ENCODE measurements at regions of chr1 and their contacts with region 1.

Region 1: DNA sequence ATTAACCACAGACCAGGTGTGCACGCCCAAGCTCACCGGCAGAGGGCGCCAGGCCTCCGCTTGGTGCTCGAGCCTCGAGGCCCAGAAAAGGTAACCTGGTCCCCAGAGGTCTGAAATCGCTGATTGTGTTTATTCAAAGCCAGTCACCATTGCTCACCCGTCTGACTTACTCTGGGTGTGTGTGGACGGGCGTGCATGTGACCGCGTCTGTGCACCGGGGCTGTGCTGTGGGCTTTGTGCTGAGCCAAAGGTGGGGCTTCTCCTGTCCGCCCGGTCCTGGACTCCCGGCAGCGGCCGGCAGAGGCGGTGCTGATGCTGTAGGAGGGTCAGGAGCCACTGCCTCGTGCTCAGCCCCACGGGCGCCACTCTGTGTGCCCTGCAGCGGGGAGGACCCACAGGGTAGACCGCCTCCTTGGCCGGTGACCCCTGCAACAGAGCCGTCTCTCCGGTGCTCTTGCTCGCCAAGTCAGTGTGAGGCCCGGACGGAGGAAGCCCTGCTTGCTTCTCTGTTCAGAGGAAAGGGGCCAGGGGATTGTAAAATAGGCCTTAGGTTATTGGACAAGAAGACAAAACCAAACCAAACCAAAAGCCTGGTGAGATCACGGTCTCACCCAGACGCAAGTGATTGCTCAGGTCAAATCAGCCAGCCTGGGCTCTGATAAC is 32.0 kb upstream of the BTG2 start:
- DNase-seq: peak; percentile 84 to 93 (median 90)
- H3K4me3 ChIP-seq: peak overlapping the region in 58 of 59 donors; percentile 5 to 61 (median 41)
- H3K27ac ChIP-seq: peak overlapping the region; percentile 71 to 99 (median 98)
- H3K27me3 ChIP-seq: no peaks in the 10 kb centered on the region
- CTCF ChIP-seq: peak; percentile 95 to 100 (median 99)

Region 2: DNA sequence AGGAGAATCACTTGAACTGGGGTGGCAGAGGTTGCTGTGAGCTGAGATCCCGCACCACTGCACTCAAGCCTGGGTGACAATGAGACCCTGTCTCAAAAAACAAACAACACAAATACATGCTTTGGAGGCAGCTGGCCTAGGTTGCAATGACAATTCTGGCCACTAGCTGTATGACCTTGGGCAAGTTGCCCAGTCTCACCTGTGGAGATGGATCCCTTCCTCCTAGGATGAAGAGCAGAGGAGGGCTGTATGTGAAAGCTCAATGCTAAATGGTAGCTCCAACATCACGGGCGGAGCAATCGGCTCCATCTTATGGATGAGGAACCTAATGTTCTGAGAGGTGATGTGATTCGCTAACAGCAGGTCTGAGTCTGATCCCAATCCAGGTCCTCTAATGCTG is 125.2 kb before region 1 on chr1:
- intact Hi-C with region 1: no loop called
- DNase-seq: peak in 1 of 10 donors; percentile 48
- H3K4me3 ChIP-seq: no peak overlapping the region
- H3K27ac ChIP-seq: peak overlapping the region in 57 of 59 donors; percentile 20 to 97 (median 85)
- H3K27me3 ChIP-seq: no peaks in the 10 kb centered on the region
- CTCF ChIP-seq: peak in 12 of 56 donors; percentile 6 to 41 (median 18)

Region 3: DNA sequence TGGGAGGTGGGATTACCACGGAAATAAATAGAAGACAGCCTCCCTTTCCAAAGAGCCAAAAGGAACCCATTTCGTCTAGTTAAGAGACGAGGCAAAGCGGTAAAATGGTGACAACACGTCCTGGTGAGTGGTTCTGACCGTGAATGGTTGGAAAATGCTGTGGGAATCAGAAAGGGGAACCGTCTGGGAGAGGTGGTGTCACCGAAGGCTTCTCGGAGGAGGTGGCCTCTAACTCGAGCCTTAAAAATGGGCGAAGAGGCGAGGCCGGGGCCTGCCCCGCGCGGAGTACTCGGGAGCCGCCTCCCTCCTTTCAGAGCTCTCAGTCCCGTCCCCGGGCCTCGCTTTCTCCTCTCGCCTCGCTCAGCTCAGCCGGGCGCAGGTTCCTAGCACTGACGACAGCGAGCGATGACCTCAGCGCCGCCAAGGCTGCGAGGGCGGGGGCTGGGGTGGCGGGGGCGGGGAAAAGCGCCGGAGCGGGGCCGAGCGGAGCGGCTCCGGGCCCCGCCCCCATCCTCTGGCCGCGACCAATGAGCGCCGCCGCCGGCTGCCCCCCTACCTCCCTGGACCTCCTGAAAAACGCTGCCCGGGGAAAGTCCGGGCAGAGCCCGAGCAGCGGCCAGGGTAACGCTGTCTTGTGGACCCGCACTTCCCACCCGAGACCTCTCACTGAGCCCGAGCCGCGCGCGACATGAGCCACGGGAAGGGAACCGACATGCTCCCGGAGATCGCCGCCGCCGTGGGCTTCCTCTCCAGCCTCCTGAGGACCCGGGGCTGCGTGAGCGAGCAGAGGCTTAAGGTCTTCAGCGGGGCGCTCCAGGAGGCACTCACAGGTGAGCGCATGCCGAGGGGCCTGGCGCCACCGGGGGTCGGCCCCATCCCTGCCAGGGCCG is 31.8 kb after region 1 on chr1 and contains the start of gene BTG2:
- intact Hi-C with region 1: loop called (anchors 1 kb)
- DNase-seq: peak; percentile 93 to 95 (median 94)
- H3K4me3 ChIP-seq: peak within 1 kb of the TSS; percentile 68 to 100 (median 98)
- H3K27ac ChIP-seq: peak within 1 kb of the TSS; percentile 80 to 100 (median 99)
- H3K27me3 ChIP-seq: no peaks in the 10 kb centered on the region
- CTCF ChIP-seq: peak in 23 of 56 donors; percentile 5 to 49 (median 20)
- total RNA-seq, gene BTG2: 21.2 to 122 (median 33.4) TPM

Region 4: DNA sequence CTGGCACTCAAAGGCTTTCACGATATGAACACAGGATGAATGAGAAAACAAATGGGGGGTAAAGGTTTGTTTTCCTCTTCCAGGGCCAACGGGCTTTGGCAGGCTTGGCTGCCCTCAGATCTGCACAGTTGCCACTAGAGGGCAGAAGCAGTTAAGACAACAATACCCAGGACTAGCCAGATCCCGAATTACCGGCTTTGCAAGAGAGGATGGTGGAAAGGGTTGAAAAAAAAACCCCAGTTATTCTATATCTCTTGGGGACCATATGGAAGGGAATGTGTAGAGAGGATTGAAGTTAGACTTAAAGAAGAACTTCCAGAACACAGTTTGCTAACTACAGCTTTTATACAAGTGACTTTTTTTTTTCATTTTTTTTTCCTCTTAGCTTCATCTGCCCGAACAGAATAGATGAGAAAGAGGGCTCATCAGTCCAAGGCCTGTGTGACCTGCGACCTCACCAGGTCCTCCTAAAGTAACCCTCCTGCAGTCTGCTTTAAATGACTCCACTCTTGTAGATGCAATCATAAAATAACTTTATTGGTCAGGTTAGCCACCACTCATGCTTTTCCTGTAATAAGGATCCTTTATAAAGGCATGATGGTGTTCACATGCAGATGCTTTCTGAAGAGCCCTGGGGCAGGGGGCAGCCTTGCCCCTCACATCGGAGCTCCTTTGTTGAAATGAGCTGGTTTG is 66.9 kb after region 1 on chr1:
- intact Hi-C with region 1: loop called in 1 of 2 experiments (anchors 1 kb)
- DNase-seq: peak; percentile 39 to 83 (median 70)
- H3K4me3 ChIP-seq: no peak overlapping the region
- H3K27ac ChIP-seq: peak overlapping the region in 48 of 59 donors; percentile 0 to 80 (median 62)
- H3K27me3 ChIP-seq: no peaks in the 10 kb centered on the region
- CTCF ChIP-seq: peak; percentile 84 to 99 (median 96)

Region 5: GRCh38 chr1:203480525-203481084 is 207.3 kb after region 1 on chr1:
- intact Hi-C with region 1: loop called in 1 of 2 experiments (anchors 5 kb)
- DNase-seq: no peak
- H3K4me3 ChIP-seq: peak overlapping the region in 9 of 59 donors; percentile 1 to 59 (median 15)
- H3K27ac ChIP-seq: peak overlapping the region in 56 of 59 donors; percentile 22 to 94 (median 72)
- H3K27me3 ChIP-seq: no peaks in the 10 kb centered on the region
- CTCF ChIP-seq: no peak

Region 6: GRCh38 chr1:203625628-203626019 is 352.3 kb after region 1 on chr1:
- intact Hi-C with region 1: loop called in 1 of 2 experiments (anchors 5 kb)
- DNase-seq: peak in 3 of 10 donors; percentile 23 to 63 (median 56)
- H3K4me3 ChIP-seq: peak overlapping the region in 16 of 59 donors; percentile 6 to 90 (median 72)
- H3K27ac ChIP-seq: peak overlapping the region in 35 of 59 donors; percentile 1 to 90 (median 64)
- H3K27me3 ChIP-seq: no peaks in the 10 kb centered on the region
- CTCF ChIP-seq: peak; percentile 19 to 84 (median 69)

Measured in dorsolateral prefrontal cortex (tissue), 120 donors.